Heart left ventricle (tissue), 16 donors: ENCODE measurements at regions of chr3 and their contacts with region 1.

Region 1: GRCh38 chr3:132675408-132675807 is 15.3 kb downstream of the UBA5 start:
- DNase-seq: no peak
- ATAC-seq: no peak
- H3K4me3 ChIP-seq: no peak overlapping the region
- H3K27ac ChIP-seq: no peak overlapping the region
- H3K4me1 ChIP-seq: no peaks in the 10 kb centered on the region
- H3K27me3 ChIP-seq: no peaks in the 10 kb centered on the region
- CTCF ChIP-seq: no peak
- POLR2A ChIP-seq: no peak

Region 2: DNA sequence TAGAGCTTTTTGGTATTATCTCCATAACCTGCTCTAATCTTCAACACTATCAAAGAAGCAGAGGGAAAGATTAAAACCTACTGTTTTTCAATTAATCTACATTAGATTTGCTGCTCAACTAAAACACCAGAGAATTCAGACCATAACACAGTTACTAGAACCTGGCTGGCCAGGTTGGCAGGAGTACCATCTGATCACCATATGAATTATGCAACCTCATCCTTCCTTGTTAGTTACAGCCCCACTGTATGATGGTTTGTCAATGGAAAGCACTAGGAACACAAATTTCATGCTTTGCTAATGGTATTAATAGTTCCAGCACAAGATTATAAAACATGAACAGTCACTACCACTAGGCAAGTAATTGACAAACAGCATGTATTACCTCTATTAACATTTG is 41.0 kb after region 1 on chr3:
- intact Hi-C with region 1: loop called in 1 of 10 experiments (anchors 5 kb)
- DNase-seq: no peak
- ATAC-seq: no peak
- H3K4me3 ChIP-seq: no peak overlapping the region
- H3K27ac ChIP-seq: no peak overlapping the region
- H3K4me1 ChIP-seq: peaks cover 0 to 33% (median 23%) of the 10 kb centered on the region in 12 donors
- H3K27me3 ChIP-seq: no peaks in the 10 kb centered on the region
- CTCF ChIP-seq: no peak
- POLR2A ChIP-seq: no peak